Naive thymus-derived CD4-positive, alpha-beta T cell (primary cell): ENCODE measurements at regions of chr16 and their contacts with region 1.

Region 1: GRCh38 chr16:50210266-50211038 is 55.9 kb upstream of the ADCY7 start:
- DNase-seq: peak; percentile 25 to 73 (median 61)
- ATAC-seq: peak; percentile 93
- H3K4me3 ChIP-seq: no peak overlapping the region
- H3K4me3 Mint-ChIP-seq: no peak overlapping the region
- H3K27ac ChIP-seq: no peak overlapping the region
- H3K27ac Mint-ChIP-seq: peak overlapping the region; percentile 48 to 90 (median 83)
- H3K4me1 ChIP-seq: no peaks in the 10 kb centered on the region
- H3K4me1 Mint-ChIP-seq: peaks cover 17 to 50% (median 38%) of the 10 kb centered on the region in 7 donors
- H3K27me3 ChIP-seq: no peaks in the 10 kb centered on the region
- H3K27me3 Mint-ChIP-seq: no peaks in the 10 kb centered on the region

Region 2: DNA sequence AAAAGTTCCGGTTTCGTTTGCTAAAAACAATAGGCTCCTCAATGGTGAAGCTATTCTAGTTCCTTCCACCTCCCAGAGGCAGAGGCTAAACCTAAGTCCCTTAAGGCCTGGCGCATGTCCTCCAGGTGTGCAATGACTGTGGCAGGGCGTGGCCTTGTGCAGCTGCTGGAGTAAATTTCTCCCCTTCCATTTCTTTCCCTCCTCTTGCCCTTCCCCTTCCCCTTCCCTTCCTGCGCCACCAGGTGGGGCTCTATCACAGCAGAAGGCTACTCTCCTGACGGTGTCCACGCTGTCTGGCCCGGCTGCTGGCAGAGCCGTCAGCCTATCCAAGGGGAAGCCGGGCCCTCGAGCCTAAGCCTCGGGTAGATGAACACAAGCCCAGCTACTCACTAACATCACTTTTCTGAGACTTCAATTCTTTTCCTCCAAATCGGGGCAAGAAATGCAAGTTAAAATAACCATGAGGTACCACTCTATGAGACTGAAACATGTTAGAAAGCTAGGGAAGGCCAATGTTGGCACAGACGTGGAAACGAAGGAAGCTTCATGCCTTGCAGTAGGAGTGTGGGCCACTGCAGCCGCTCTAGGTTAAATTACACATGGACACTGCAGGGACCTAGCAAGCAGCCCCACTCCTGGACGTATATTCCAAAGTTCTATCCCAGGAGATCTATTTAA is 802.4 kb before region 1 on chr16:
- CTCF ChIA-PET with region 1: no interaction called
- POLR2A ChIA-PET with region 1: no interaction called
- intact Hi-C with region 1: loop called in 1 of 2 experiments (anchors 1 kb)
- DNase-seq: peak; percentile 38 to 67 (median 60)
- ATAC-seq: peak; percentile 71
- H3K4me3 ChIP-seq: no peak overlapping the region
- H3K4me3 Mint-ChIP-seq: peak overlapping the region in 3 of 10 donors; percentile 12 to 53 (median 17)
- H3K27ac ChIP-seq: no peak overlapping the region
- H3K27ac Mint-ChIP-seq: no peak overlapping the region
- H3K4me1 ChIP-seq: no peaks in the 10 kb centered on the region
- H3K4me1 Mint-ChIP-seq: no peaks in the 10 kb centered on the region
- H3K27me3 ChIP-seq: no peaks in the 10 kb centered on the region
- H3K27me3 Mint-ChIP-seq: peaks cover 5 to 10% (median 6%) of the 10 kb centered on the region in 5 donors

Region 3: DNA sequence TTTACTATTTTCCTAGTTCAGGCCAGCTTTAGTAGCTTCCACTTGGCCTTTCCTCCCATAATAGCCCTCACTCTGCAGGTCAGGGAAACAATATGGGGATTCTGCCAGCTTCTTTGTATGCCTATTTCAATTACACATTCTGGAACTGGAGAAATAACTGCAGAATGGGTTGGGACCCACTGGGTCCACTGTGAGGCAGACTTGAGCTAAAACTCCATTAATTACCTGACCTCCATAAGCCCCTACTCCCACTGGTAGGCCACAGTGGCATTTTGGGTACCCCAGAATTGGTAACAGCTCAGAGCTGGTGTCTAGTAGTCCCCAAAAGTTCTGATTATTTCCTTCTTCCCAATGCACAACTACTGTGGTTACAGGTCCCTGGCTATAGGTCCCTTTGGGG is 74.1 kb before region 1 on chr16:
- CTCF ChIA-PET with region 1: interaction called, 3 read pairs
- POLR2A ChIA-PET with region 1: no interaction called
- intact Hi-C with region 1: loop called in 1 of 2 experiments (anchors 1 kb)
- DNase-seq: no peak
- ATAC-seq: no peak
- H3K4me3 ChIP-seq: no peak overlapping the region
- H3K4me3 Mint-ChIP-seq: no peak overlapping the region
- H3K27ac ChIP-seq: no peak overlapping the region
- H3K27ac Mint-ChIP-seq: no peak overlapping the region
- H3K4me1 ChIP-seq: no peaks in the 10 kb centered on the region
- H3K4me1 Mint-ChIP-seq: peaks cover 0 to 1% (median 0%) of the 10 kb centered on the region in 7 donors
- H3K27me3 ChIP-seq: no peaks in the 10 kb centered on the region
- H3K27me3 Mint-ChIP-seq: peaks cover 0 to 2% (median 0%) of the 10 kb centered on the region in 5 donors

Region 4: DNA sequence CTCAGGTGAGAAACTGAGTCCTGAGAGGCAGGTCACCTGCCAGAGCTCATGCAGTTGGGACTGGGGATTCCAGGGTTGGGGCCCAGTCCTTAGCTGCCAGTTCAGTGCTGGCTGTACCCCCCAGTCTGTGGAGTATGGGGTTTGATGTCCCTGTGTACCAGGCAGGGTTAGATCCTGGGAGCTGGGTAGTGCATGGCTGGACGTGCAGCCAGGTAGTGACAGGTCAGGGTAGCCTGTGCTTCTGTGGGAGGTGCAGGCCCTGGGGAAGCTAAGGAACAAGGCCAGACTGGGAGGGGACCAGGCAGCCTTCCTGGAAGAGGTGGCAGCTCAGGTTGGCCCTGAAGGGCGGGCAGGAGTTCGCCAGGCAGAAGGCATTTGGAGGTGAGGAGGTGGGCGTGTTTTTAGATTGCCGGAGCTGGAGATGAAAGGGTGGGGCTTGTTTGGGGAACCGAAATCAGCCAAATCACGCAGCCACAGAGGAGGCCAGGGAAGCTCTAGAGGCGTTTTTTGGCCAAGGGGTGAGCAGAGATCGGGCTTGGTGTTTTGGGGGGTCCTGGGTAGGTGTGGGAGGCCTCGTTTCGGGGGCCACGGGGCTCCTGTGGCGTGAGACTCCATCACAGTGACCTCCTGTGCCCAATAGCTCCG is 63.4 kb after region 1 on chr16:
- CTCF ChIA-PET with region 1: no interaction called
- POLR2A ChIA-PET with region 1: interaction called, 4 read pairs
- intact Hi-C with region 1: loop called (anchors 2 kb)
- DNase-seq: peak in 5 of 9 donors; percentile 26 to 52 (median 40)
- ATAC-seq: peak; percentile 65
- H3K4me3 ChIP-seq: peak overlapping the region; percentile 67
- H3K4me3 Mint-ChIP-seq: peak overlapping the region; percentile 83 to 98 (median 92)
- H3K27ac ChIP-seq: peak overlapping the region; percentile 88
- H3K27ac Mint-ChIP-seq: peak overlapping the region; percentile 95 to 99 (median 99)
- H3K4me1 ChIP-seq: peaks cover 93% of the 10 kb centered on the region in 2 donors
- H3K4me1 Mint-ChIP-seq: peaks cover 72 to 99% (median 93%) of the 10 kb centered on the region in 7 donors
- H3K27me3 ChIP-seq: no peaks in the 10 kb centered on the region
- H3K27me3 Mint-ChIP-seq: no peaks in the 10 kb centered on the region

Region 5: DNA sequence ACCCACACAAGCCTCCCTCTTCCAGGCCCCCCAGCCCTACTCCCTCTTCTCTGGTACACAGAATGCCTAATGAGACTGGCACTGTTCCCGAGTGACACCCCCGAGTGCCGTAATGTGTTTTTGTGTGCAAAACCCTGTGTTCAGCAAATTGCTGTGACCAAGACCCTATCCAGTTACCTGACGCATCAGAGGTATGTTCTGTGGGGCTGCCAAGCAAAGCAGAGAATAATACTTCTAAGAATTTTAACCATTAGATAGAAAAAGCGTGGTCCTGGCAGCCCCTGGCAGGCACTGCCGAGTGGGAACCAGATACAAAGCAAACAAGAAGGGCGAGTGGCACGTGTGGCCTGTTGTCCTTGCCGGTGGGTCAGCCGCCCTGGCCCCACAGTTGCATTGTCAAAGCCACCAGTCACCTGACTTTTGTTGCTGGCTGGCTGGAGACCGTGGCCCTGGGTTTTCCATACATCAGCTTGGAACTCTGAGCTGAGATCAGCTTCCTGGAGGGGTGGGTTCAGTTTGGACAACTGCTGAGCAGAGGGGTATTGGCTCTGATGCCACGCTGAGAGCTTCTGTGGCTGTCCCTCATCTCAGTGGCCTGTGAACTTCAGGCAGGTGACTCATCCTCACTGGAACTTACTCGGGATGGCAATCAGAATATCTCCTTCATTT is 227.5 kb after region 1 on chr16:
- CTCF ChIA-PET with region 1: no interaction called
- POLR2A ChIA-PET with region 1: no interaction called
- intact Hi-C with region 1: no loop called
- DNase-seq: no peak
- ATAC-seq: no peak
- H3K4me3 ChIP-seq: no peak overlapping the region
- H3K4me3 Mint-ChIP-seq: no peak overlapping the region
- H3K27ac ChIP-seq: no peak overlapping the region
- H3K27ac Mint-ChIP-seq: no peak overlapping the region
- H3K4me1 ChIP-seq: no peaks in the 10 kb centered on the region
- H3K4me1 Mint-ChIP-seq: no peaks in the 10 kb centered on the region
- H3K27me3 ChIP-seq: no peaks in the 10 kb centered on the region
- H3K27me3 Mint-ChIP-seq: peaks cover 0 to 19% (median 0%) of the 10 kb centered on the region in 5 donors

Region 6: DNA sequence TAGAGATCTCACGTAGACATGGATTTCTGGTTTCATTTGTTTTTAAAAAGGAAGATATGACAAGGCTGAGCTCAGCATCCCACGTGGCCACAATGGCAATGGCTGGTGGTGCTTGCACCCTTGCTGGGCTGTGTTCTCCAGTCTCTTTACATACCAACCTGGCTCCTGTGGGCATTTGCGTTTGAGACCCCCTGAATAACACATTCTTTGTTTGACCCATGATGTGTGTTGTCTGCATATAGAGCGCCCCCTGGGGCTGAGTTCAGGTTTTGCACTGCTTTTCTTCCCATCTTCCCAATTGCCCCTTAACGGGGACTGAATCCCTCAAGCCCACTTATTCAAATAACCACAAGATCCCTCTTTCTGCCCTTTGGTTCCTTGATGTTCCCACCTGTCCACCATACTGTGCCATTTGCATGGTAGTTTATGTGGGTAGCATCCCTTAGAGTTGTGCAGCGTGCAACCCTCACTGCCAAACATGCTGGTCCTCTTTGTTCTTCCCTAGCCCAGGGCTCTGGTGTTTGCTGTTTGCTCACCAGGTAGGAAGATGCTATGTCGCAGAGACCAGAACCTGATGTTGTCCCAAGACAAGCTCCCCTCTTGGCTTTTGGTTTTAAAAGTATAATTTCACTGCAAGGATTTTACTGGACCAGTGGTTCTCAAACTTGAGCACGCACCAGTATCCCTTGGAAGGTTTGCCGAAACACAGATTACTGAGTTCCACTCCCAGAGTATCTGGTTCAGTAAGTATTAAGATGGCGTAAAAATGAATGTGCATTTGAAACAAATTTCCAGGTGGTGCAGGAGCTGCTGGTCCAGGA is 299.3 kb after region 1 on chr16:
- CTCF ChIA-PET with region 1: interaction called, 3 read pairs
- POLR2A ChIA-PET with region 1: no interaction called
- intact Hi-C with region 1: loop called (anchors 2 to 10 kb)
- DNase-seq: peak in 5 of 9 donors; percentile 1 to 40 (median 7)
- ATAC-seq: peak; percentile 45
- H3K4me3 ChIP-seq: no peak overlapping the region
- H3K4me3 Mint-ChIP-seq: no peak overlapping the region
- H3K27ac ChIP-seq: no peak overlapping the region
- H3K27ac Mint-ChIP-seq: peak overlapping the region in 1 of 9 donors; percentile 27
- H3K4me1 ChIP-seq: no peaks in the 10 kb centered on the region
- H3K4me1 Mint-ChIP-seq: peaks cover 0 to 8% (median 0%) of the 10 kb centered on the region in 7 donors
- H3K27me3 ChIP-seq: no peaks in the 10 kb centered on the region
- H3K27me3 Mint-ChIP-seq: peaks cover 0 to 17% (median 0%) of the 10 kb centered on the region in 5 donors

Region 7: DNA sequence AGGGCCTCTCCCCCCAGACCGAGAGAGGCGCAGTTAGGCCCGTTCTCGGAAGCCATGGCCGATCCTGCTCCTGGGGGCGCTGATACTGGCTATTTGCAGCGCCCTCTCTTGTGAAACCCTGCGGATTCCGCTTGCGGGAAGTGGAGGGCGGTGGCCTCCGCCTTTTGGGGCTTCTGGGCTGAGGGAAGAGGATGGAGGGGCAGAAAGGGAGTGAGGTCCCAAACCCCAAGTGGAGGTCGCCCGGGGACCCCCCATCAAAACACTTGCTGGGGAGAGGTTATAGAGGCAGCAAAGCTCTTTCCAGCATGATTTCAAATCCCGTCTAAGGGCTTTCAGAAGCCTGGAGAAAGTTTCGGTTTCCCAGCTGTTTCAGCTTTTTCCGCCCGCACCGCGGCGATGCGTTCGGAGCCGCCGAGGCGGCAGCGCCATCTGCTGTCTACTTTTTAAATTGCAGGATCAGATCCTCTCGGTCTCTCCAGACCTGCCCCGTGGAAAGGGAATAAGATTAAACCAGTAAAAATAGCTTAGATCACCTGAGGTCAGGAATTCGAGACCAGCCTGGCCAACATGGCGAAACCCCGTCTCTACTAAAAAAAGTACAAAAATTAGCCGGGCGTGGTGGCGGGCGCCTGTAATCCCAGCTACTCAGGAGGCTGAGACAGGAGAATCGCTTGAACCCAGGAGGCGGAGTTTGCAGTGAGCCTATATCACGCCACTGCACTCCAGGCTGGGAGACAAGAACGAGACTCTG is 454.9 kb after region 1 on chr16:
- CTCF ChIA-PET with region 1: interaction called, 35 read pairs
- POLR2A ChIA-PET with region 1: interaction called, 3 read pairs
- intact Hi-C with region 1: loop called (anchors 1 kb)
- DNase-seq: peak; percentile 71 to 90 (median 77)
- ATAC-seq: peak; percentile 80
- H3K4me3 ChIP-seq: peak overlapping the region; percentile 60
- H3K4me3 Mint-ChIP-seq: peak overlapping the region; percentile 73 to 87 (median 84)
- H3K27ac ChIP-seq: peak overlapping the region; percentile 62
- H3K27ac Mint-ChIP-seq: peak overlapping the region; percentile 82 to 97 (median 89)
- H3K4me1 ChIP-seq: peaks cover 17% of the 10 kb centered on the region in 2 donors
- H3K4me1 Mint-ChIP-seq: peaks cover 28 to 49% (median 44%) of the 10 kb centered on the region in 7 donors
- H3K27me3 ChIP-seq: no peaks in the 10 kb centered on the region
- H3K27me3 Mint-ChIP-seq: no peaks in the 10 kb centered on the region